ENCODE measurements at regions of chr2 and their contacts with region 1.

Region 1: GRCh38 chr2:172102391-172103278 is at the start of gene DLX2:
- DNase-seq: peak; percentile 79
- H3K4me3 Mint-ChIP-seq: peak within 1 kb of the TSS; percentile 98
- H3K27ac Mint-ChIP-seq: peak within 1 kb of the TSS; percentile 83
- H3K4me1 Mint-ChIP-seq: peaks cover 39% of the 10 kb centered on the region
- H3K27me3 Mint-ChIP-seq: peaks cover 64% of the 10 kb centered on the region
- CTCF ChIP-seq: no peak
- total RNA-seq, gene DLX2: not detected in 2 replicates

Region 2: GRCh38 chr2:171703574-171704347 is 398.9 kb before region 1 on chr2:
- CTCF ChIA-PET with region 1: interaction called, 6 read pairs
- intact Hi-C with region 1: loop called (anchors 5 kb)
- DNase-seq: no peak
- H3K4me3 Mint-ChIP-seq: no peak overlapping the region
- H3K27ac Mint-ChIP-seq: no peak overlapping the region
- H3K4me1 Mint-ChIP-seq: no peaks in the 10 kb centered on the region
- H3K27me3 Mint-ChIP-seq: no peaks in the 10 kb centered on the region
- CTCF ChIP-seq: peak; percentile 23

Region 3: GRCh38 chr2:171893824-171894611 is 208.6 kb before region 1 on chr2 and contains the start of gene SLC25A12:
- CTCF ChIA-PET with region 1: no interaction called
- intact Hi-C with region 1: loop called (anchors 1 kb)
- DNase-seq: peak; percentile 83
- H3K4me3 Mint-ChIP-seq: peak within 1 kb of the TSS; percentile 89
- H3K27ac Mint-ChIP-seq: peak within 1 kb of the TSS; percentile 14
- H3K4me1 Mint-ChIP-seq: peaks cover 14% of the 10 kb centered on the region
- H3K27me3 Mint-ChIP-seq: no peaks in the 10 kb centered on the region
- CTCF ChIP-seq: no peak
- total RNA-seq, gene SLC25A12: 11.9 and 17.8 TPM in 2 replicates

Region 4: DNA sequence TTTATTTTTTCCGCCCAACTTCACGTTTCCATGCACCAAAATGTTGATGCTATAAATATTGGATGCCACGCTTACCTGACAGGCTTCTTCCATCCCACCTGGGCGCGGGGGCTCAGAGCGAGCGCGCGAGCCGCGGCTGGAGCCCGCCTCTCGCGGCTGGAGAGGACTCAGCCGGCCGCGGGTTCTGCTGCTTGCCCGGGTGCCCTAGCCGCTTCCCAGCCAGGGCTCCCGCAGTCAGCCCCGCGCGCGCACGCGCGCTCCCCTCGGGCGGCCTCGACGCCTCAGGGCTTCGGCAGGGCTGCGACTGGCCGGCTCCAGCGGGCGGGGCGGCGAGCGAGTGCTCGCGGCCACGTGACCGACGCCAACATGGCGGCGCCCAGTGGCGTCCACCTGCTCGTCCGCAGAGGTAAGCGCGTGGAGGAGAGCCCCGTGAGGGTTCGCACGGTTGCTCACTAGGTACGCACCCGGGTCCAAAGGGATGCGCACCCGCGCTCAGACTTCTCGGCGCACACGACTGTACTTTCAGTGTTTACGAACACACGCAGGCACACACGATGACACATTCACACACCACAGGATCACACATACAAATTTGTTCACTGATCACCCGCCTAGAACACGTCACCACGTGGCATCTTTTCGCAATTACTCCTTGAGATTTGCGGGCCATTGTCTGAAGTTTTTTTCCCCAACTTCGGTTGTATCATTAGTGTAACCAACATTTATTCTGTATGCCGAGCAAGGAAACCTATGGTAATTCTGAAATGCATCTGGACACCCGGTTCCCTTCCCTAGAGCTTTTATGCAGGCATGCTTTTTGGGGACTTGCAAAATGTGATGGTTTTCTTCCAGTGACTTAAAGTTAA is 102.8 kb before region 1 on chr2 and contains the start of gene METAP1D:
- CTCF ChIA-PET with region 1: no interaction called
- intact Hi-C with region 1: loop called (anchors 10 kb)
- DNase-seq: peak; percentile 94
- H3K4me3 Mint-ChIP-seq: peak within 1 kb of the TSS; percentile 84
- H3K27ac Mint-ChIP-seq: peak within 1 kb of the TSS; percentile 56
- H3K4me1 Mint-ChIP-seq: peaks cover 7% of the 10 kb centered on the region
- H3K27me3 Mint-ChIP-seq: no peaks in the 10 kb centered on the region
- CTCF ChIP-seq: no peak
- total RNA-seq, gene METAP1D: 11.0 and 11.1 TPM in 2 replicates

Region 5: DNA sequence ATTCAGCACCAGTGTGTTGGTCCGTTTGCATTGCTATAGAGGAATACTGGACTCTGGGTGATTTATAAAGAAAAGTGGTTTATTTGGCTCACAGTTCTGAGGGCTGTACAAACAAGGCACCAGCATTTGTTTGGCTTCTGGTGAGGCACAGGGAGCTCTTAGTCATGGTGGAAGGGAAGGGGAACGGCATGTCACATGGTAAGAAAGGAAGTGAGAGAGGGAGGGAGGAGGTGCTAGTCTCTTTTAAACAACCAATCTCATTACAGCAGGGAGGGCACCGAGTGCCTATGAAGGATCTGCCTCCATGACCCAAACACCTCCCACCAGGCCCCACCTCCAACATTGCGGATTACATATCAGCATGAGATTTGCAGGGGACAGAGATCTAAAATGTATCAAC is 144.0 kb after region 1 on chr2:
- CTCF ChIA-PET with region 1: no interaction called
- intact Hi-C with region 1: no loop called
- DNase-seq: no peak
- H3K4me3 Mint-ChIP-seq: no peak overlapping the region
- H3K27ac Mint-ChIP-seq: no peak overlapping the region
- H3K4me1 Mint-ChIP-seq: peaks cover 51% of the 10 kb centered on the region
- H3K27me3 Mint-ChIP-seq: no peaks in the 10 kb centered on the region
- CTCF ChIP-seq: no peak

Region 6: DNA sequence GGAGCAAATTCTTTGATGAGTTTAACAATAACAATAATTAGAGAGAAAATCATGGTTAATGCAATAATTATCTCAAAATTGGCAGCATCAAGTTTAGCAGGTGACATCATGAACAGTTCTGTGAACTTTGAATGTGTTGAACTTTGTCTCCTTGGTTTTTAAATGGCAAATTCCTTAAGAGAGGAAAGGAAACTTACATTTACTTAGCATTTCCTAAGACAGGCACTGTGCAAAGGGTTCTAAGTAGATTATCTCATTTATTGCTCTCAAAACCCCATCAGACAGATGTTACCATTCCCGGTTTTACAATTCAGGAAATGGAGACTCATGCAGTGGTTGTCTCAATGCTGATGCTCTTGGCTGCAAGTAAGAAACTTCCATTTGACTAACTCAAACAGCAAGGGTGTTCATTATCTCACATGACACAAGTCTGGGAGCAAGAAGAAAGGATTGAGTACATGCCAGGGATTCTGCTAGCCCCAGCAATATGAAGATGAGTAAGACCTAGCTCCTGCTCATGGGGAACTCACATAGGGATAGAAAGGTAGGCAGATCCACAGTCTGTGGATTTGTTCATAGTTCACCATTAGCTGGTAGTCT is 243.4 kb after region 1 on chr2:
- CTCF ChIA-PET with region 1: no interaction called
- intact Hi-C with region 1: no loop called
- DNase-seq: no peak
- H3K4me3 Mint-ChIP-seq: no peak overlapping the region
- H3K27ac Mint-ChIP-seq: no peak overlapping the region
- H3K4me1 Mint-ChIP-seq: peaks cover 24% of the 10 kb centered on the region
- H3K27me3 Mint-ChIP-seq: no peaks in the 10 kb centered on the region
- CTCF ChIP-seq: no peak

Measured in Calu3 (cell line).